Pancreas (tissue), 10 donors: ENCODE measurements at regions of chr12 and their contacts with region 1.

Region 1: DNA sequence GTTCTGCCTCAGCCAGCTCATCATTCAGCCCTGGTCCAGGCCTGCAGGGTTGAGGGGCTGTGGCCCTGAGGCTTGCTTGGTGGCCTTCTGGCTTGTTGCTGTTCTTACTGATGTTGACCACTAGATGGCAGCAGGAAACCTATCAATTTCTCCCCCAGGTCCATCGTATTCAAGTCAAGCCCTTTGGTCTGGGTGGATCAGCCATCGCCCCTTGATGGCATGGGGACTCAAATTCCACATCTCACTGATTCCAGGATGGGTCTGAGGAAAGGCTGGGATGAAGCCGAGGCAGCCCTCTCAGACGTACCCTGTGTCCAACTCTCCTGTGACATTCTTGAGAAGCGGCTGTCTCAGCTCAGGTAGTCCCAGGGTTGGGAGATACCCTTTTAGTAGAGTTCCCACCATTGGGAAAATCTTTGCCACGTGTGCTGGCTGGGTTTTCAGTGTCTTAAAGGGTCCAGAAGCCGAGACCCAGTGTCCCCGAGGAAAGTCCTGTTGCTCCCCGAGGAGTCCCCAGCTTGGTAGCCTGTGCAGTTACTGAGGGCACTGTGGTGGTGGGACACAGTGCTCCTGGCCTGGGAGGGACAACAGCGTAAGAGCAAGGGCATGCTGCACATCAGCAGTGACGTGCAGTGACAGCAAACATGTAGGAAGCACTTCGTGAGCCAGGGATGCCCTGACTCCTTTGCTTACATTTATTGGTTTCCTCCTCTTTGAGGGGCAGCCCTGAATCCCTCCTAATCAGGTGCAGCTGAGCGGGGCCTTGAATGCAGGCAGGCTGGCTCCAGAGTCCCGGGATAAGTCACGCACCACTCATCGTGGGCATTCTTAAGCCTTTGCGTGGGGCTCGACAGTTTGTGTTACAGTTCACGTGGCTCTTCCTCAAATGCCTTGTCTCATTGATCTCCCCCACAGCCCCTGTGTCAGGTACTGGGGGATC is 58.6 kb downstream of the TSPAN9 start:
- DNase-seq: peak in 2 of 6 donors; percentile 26 to 54
- ATAC-seq: peak; percentile 60 to 87 (median 82)
- H3K4me3 ChIP-seq: no peak overlapping the region
- H3K27ac ChIP-seq: no peak overlapping the region
- H3K4me1 ChIP-seq: no peaks in the 10 kb centered on the region
- H3K27me3 ChIP-seq: no peaks in the 10 kb centered on the region
- CTCF ChIP-seq: peak; percentile 68 to 79 (median 72)

Region 2: DNA sequence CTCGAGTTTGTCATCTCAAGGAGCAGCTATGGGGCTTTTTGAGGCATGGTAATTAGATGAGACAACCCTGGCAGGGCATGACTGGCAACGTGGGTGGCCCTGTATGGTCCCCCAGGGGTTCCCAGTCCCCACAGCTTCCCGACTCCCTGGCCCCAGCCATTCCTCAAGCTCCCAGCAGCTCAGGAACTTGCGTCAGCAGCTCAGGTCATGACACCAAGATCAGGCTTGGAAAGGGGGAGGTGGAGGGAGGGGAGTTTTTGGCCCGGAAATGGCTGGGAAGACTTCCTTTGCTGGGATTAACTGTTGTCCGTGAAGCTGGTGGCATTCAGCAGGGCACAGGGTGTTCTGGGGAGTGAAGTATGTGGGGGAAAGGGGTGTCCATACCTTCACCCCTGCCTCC is 290.5 kb before region 1 on chr12:
- intact Hi-C with region 1: no loop called
- DNase-seq: no peak
- ATAC-seq: peak in 1 of 4 donors; percentile 40
- H3K4me3 ChIP-seq: no peak overlapping the region
- H3K27ac ChIP-seq: no peak overlapping the region
- H3K4me1 ChIP-seq: no peaks in the 10 kb centered on the region
- H3K27me3 ChIP-seq: no peaks in the 10 kb centered on the region
- CTCF ChIP-seq: no peak

Region 3: GRCh38 chr12:3275171-3276041 is 139.6 kb after region 1 on chr12:
- intact Hi-C with region 1: loop called (anchors 2 to 10 kb)
- DNase-seq: peak in 5 of 6 donors; percentile 35 to 95 (median 77)
- ATAC-seq: peak; percentile 72 to 91 (median 89)
- H3K4me3 ChIP-seq: no peak overlapping the region
- H3K27ac ChIP-seq: no peak overlapping the region
- H3K4me1 ChIP-seq: no peaks in the 10 kb centered on the region
- H3K27me3 ChIP-seq: no peaks in the 10 kb centered on the region
- CTCF ChIP-seq: peak; percentile 95 to 99 (median 98)